PC-3 (cell line): ENCODE measurements at regions of chr5 and their contacts with region 1.

Region 1: GRCh38 chr5:154972476-154973080 is 31.7 kb downstream of the MRPL22 start:
- DNase-seq: peak; percentile 56
- ATAC-seq: peak; percentile 72
- H3K4me3 ChIP-seq: no peak overlapping the region
- H3K27ac ChIP-seq: no peak overlapping the region
- H3K4me1 ChIP-seq: peaks cover 2% of the 10 kb centered on the region; the same call in 1 of the 2 replicates
- H3K27me3 ChIP-seq: no peaks in the 10 kb centered on the region
- CTCF ChIP-seq: peak; percentile 71

Region 2: DNA sequence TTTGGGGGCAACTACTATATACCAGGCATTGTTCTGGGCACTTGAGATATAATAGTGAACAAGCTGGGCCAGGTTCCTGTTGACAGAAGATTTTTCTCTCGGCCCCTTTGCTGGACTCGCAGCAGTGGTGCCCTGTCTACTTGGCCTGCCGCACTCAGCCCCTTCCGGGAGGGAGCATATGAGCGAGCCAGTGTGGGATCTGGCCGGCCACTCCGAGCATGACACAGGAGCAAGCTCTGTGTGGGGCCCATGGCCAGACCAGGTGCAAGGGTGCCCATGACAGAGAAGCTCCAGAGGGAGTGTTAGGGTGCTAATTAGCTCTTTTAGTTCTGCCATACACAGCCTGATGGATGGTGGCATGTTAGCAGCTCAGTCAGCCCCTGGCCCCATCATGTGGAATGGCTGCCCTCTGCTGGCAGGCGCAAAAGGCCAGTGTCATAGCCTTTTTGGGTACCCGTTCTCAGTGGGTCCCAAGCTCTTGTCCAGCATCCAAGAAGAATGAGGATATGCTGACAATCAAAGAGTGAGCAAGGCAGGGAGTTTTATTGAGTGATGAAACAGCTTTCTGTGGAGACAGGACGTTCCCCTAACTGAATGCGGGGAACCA is 31.7 kb after region 1 on chr5:
- CTCF ChIA-PET with region 1: interaction called, 13 read pairs
- POLR2A ChIA-PET with region 1: no interaction called
- intact Hi-C with region 1: loop called (anchors 1 kb)
- DNase-seq: peak; percentile 56
- ATAC-seq: peak; percentile 84
- H3K4me3 ChIP-seq: no peak overlapping the region
- H3K27ac ChIP-seq: no peak overlapping the region
- H3K4me1 ChIP-seq: peaks cover 4% of the 10 kb centered on the region
- H3K27me3 ChIP-seq: no peaks in the 10 kb centered on the region
- CTCF ChIP-seq: peak; percentile 72

Region 3: GRCh38 chr5:155027993-155028629 is 55.5 kb after region 1 on chr5:
- CTCF ChIA-PET with region 1: interaction called, 3 read pairs
- POLR2A ChIA-PET with region 1: no interaction called
- intact Hi-C with region 1: loop called (anchors 1 kb)
- DNase-seq: peak; percentile 15
- ATAC-seq: peak; percentile 70
- H3K4me3 ChIP-seq: no peak overlapping the region
- H3K27ac ChIP-seq: no peak overlapping the region
- H3K4me1 ChIP-seq: no peaks in the 10 kb centered on the region
- H3K27me3 ChIP-seq: no peaks in the 10 kb centered on the region
- CTCF ChIP-seq: peak; percentile 49; the same call in 1 of the 2 replicates

Region 4: DNA sequence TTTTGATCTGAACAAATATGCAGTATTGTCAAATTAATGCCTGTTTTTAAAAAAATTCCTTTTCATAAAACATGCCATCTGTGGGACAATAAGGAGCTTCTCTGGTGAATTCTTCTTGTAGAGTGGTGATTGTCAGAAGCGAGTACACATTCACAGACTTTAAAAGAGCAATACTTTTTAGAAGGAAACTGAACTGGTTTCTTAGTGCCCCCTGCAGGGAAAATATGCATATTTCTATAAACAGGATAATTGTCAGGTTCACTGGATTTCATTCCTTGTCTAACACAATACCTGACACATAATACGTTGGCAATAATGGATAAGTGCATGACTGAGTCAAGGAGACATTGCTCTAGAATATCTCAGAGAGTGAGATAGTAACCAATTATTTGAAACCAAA is 174.6 kb after region 1 on chr5:
- CTCF ChIA-PET with region 1: no interaction called
- POLR2A ChIA-PET with region 1: no interaction called
- intact Hi-C with region 1: loop called (anchors 5 kb)
- DNase-seq: peak; percentile 7
- ATAC-seq: no peak
- H3K4me3 ChIP-seq: no peak overlapping the region
- H3K27ac ChIP-seq: no peak overlapping the region
- H3K4me1 ChIP-seq: no peaks in the 10 kb centered on the region
- H3K27me3 ChIP-seq: 0 out of 2 replicates have a peak, but pooled peaks cover 3% of the 10 kb centered on the region
- CTCF ChIP-seq: peak; percentile 47